ENCODE measurements at regions of chr7 and their contacts with region 1.

Region 1: GRCh38 chr7:143120696-143121405 is 11.0 kb upstream of the PIP start:
- DNase-seq: no peak
- H3K4me3 ChIP-seq: no peak overlapping the region
- H3K27ac ChIP-seq: peak overlapping the region; percentile 37 to 80
- H3K4me1 ChIP-seq: peaks cover 0 to 4% of the 10 kb centered on the region in 2 donors
- H3K27me3 ChIP-seq: no peaks in the 10 kb centered on the region
- CTCF ChIP-seq: no peak
- POLR2A ChIP-seq: no peak

Region 2: GRCh38 chr7:143131781-143132180 is 10.9 kb after region 1 on chr7 and contains the start of gene PIP:
- intact Hi-C with region 1: loop called (anchors 1 kb)
- DNase-seq: no peak
- H3K4me3 ChIP-seq: no peak within 1 kb of the TSS
- H3K27ac ChIP-seq: peak within 1 kb of the TSS; percentile 15 to 35
- H3K4me1 ChIP-seq: no peaks in the 10 kb centered on the region
- H3K27me3 ChIP-seq: no peaks in the 10 kb centered on the region
- CTCF ChIP-seq: no peak
- POLR2A ChIP-seq: no peak
- total RNA-seq, gene PIP: 1.6 to 1,201 (median 140) TPM

Measured in breast epithelium (tissue), 4 donors.